IMR-90 (cell line): ENCODE measurements at regions of chr1 and their contacts with region 1.

Region 1: GRCh38 chr1:156659994-156660751 is 17.0 kb downstream of the NES start:
- DNase-seq: peak; percentile 98
- ATAC-seq: peak; percentile 77
- H3K4me3 ChIP-seq: no peak overlapping the region
- H3K27ac ChIP-seq: peak overlapping the region; percentile 69
- H3K4me1 ChIP-seq: peaks cover 48% of the 10 kb centered on the region
- H3K27me3 ChIP-seq: peaks cover 20% of the 10 kb centered on the region
- CTCF ChIP-seq: peak; percentile 99
- POLR2A ChIP-seq: no peak
- RAD21 ChIP-seq: peak; percentile 94

Region 2: GRCh38 chr1:156583821-156584622 is 76.2 kb before region 1 on chr1:
- CTCF ChIA-PET with region 1: no interaction called
- POLR2A ChIA-PET with region 1: no interaction called
- dilution Hi-C with region 1: no loop called
- in situ Hi-C with region 1: no loop called
- intact Hi-C with region 1: loop called (anchors 2 kb)
- DNase-seq: peak; percentile 84
- ATAC-seq: peak; percentile 98
- H3K4me3 ChIP-seq: no peak overlapping the region
- H3K27ac ChIP-seq: no peak overlapping the region
- H3K4me1 ChIP-seq: no peaks in the 10 kb centered on the region
- H3K27me3 ChIP-seq: peaks cover 18% of the 10 kb centered on the region
- CTCF ChIP-seq: peak; percentile 92
- POLR2A ChIP-seq: no peak
- RAD21 ChIP-seq: peak; percentile 90

Region 3: DNA sequence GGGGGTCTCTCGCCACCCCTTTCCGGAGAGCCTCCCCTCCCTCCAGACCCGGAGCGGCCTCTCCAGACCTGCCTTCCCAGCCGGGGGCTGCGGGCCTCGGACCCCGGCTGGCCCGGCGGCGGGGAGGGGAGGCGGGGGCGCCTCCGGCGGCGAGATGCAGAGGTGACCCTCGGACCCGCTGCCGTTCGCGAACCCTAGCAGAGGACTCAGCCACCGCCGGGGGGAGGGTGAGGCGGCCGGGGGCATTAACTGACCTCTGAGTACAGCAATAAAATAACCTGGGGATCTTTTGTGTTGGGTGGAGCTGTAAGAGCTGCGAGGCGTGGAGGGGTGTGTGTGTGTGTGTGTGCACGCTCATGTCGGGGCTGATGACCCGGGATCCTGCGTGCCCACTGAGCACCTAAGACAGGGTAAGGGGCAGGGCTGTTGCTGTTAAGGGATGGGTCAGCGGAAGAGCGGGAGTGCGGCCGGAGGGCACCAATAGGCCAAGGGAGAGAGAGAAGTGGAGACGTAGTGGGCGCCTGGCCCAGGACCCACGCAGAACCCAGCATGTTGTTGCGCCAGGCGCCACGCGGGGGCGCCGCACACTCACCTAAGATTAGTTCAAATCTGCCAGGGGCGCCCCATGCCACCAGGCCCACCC is 34.6 kb before region 1 on chr1:
- CTCF ChIA-PET with region 1: interaction called, 5 read pairs
- POLR2A ChIA-PET with region 1: no interaction called
- dilution Hi-C with region 1: no loop called
- in situ Hi-C with region 1: loop called (anchors 5 kb)
- intact Hi-C with region 1: loop called (anchors 1 kb)
- DNase-seq: peak; percentile 28
- ATAC-seq: peak; percentile 71
- H3K4me3 ChIP-seq: no peak overlapping the region
- H3K27ac ChIP-seq: no peak overlapping the region
- H3K4me1 ChIP-seq: peaks cover 4% of the 10 kb centered on the region
- H3K27me3 ChIP-seq: peaks cover 54% of the 10 kb centered on the region
- CTCF ChIP-seq: peak; percentile 68
- POLR2A ChIP-seq: no peak
- RAD21 ChIP-seq: peak; percentile 65

Region 4: GRCh38 chr1:156671804-156672203 is 11.6 kb after region 1 on chr1:
- CTCF ChIA-PET with region 1: interaction called, 25 read pairs
- POLR2A ChIA-PET with region 1: interaction called, 29 read pairs
- dilution Hi-C with region 1: no loop called
- in situ Hi-C with region 1: no loop called
- intact Hi-C with region 1: no loop called
- DNase-seq: no peak
- ATAC-seq: no peak
- H3K4me3 ChIP-seq: no peak overlapping the region
- H3K27ac ChIP-seq: no peak overlapping the region
- H3K4me1 ChIP-seq: peaks cover 38% of the 10 kb centered on the region
- H3K27me3 ChIP-seq: no peaks in the 10 kb centered on the region
- CTCF ChIP-seq: no peak
- POLR2A ChIP-seq: no peak
- RAD21 ChIP-seq: no peak